Stomach (tissue), 19 donors: ENCODE measurements at regions of chr10 and their contacts with region 1.

Region 1: DNA sequence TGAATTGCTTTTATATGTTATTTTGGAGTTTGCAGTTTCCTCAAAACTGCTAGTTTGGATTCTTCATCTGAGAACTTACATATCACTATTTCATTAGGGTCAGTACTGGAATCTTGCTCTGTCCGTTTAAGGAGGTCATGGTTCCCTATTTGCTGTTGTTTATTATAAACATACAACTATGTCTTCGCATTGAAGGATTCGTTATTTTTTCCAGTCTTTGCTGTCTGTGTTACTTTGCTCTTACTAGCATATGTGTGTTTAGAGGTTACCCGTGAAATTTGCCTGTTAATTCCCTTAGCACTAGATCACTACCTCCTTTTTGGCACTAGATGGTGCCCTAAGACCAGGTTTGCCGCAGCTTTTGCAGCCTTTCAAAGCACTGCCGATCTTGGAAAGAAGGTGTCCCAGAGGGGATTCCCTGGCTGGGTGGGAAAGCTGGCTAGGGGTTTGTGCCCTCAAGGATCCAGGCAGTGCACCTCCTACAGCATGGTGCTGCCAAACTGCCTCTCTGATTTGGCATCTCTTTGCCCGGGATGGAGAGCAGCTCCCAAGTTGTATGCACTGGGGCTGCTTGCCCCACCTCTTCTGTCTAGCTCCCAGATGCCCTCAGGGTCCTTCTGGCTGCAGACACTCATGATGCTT is 103.1 kb upstream of the APBB1IP start:
- DNase-seq: peak; percentile 61 to 83
- H3K4me3 ChIP-seq: peak overlapping the region in 3 of 4 donors; percentile 15 to 38 (median 26)
- H3K27ac ChIP-seq: peak overlapping the region in 1 of 5 donors; percentile 9
- H3K4me1 ChIP-seq: peaks cover 0 to 20% (median 4%) of the 10 kb centered on the region in 4 donors
- H3K27me3 ChIP-seq: no peaks in the 10 kb centered on the region
- CTCF ChIP-seq: peak in 5 of 7 experiments; percentile 37 to 97 (median 80)
- EP300 ChIP-seq: no peak
- POLR2A ChIP-seq: no peak

Region 2: GRCh38 chr10:26540601-26541000 is 205.5 kb after region 1 on chr10:
- intact Hi-C with region 1: no loop called
- DNase-seq: peak in 1 of 2 donors; percentile 33
- H3K4me3 ChIP-seq: no peak overlapping the region
- H3K27ac ChIP-seq: no peak overlapping the region
- H3K4me1 ChIP-seq: no peaks in the 10 kb centered on the region
- H3K27me3 ChIP-seq: no peaks in the 10 kb centered on the region
- CTCF ChIP-seq: no peak
- EP300 ChIP-seq: no peak
- POLR2A ChIP-seq: no peak

Region 3: DNA sequence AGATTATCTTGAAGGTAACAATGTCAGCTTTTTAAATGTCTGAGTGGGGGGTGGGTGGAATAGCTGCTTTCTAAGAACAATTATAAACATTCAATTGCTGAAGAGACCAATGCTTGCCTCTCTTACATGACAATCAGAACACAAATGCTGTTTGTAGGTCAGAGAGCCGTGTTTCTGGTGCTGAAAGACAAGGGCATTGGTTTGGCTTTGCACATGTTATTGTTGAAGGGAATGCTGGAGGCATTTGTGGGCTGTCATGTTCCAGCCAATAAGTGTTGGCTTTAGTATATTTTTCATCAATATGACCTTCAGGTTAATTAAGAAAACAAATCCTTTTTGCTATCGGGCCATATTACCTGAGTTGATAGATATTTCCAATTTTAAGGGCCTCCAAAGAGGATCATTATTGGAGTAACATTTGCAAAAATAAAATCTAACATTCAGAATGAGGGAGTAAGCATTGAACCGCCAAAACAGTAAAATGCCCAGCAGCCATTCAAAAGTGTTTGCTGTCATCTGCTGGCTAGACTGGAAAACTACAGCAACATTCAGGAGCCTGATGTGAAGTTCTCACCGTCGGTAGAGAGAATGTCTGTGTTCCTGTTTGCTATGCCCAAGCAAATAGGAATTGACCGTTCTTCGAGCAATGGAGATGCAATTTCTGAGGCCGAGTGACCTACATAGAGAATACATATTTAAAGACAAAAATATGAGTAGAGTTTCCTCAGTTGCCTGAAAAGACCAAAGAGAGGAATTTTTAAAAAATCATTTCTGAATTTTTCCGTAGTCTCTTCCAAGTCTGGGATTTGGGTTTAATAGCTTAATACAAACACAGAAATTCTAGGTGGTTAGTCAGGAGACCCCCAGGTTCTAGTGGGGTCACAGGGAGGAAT is 221.9 kb after region 1 on chr10:
- intact Hi-C with region 1: loop called (anchors 5 kb)
- DNase-seq: peak in 1 of 2 donors; percentile 77
- H3K4me3 ChIP-seq: no peak overlapping the region
- H3K27ac ChIP-seq: peak overlapping the region in 1 of 5 donors; percentile 24
- H3K4me1 ChIP-seq: peaks cover 4 to 22% (median 6%) of the 10 kb centered on the region in 4 donors
- H3K27me3 ChIP-seq: no peaks in the 10 kb centered on the region
- CTCF ChIP-seq: peak in 5 of 7 experiments; percentile 43 to 84 (median 71)
- EP300 ChIP-seq: no peak
- POLR2A ChIP-seq: no peak